ENCODE measurements at regions of chr14 and their contacts with region 1.

Region 1: DNA sequence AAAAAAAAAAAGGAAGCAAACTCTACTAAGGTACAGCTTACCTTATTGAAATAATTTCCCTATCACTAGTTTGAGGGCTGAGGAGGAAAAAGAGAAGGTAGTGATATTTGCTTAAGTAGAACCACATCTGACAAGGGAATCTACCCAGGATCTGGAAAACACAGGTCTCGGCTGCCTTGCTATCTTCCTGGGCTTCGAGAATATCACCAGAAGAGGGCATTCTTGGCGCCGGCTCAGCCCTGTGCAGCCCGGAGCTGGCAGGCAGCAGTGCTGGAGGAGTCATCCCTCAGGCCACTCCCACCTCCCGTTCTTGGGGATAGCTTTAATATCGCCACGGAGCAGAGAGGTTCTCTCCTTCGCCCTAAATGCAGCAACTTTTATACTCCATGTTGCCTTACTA is 1181.2 kb downstream of the VRK1 start:
- DNase-seq: peak; percentile 90
- H3K4me3 Mint-ChIP-seq: peak overlapping the region; percentile 84
- H3K27ac Mint-ChIP-seq: peak overlapping the region; percentile 89
- H3K4me1 Mint-ChIP-seq: peaks cover 45% of the 10 kb centered on the region
- H3K27me3 Mint-ChIP-seq: no peaks in the 10 kb centered on the region

Region 2: GRCh38 chr14:97458661-97459579 is 519.4 kb before region 1 on chr14:
- CTCF ChIA-PET with region 1: interaction called, 3 read pairs
- POLR2A ChIA-PET with region 1: no interaction called
- intact Hi-C with region 1: loop called (anchors 5 kb)
- DNase-seq: peak; percentile 90
- H3K4me3 Mint-ChIP-seq: peak overlapping the region; percentile 96
- H3K27ac Mint-ChIP-seq: peak overlapping the region; percentile 100
- H3K4me1 Mint-ChIP-seq: peaks cover 50% of the 10 kb centered on the region
- H3K27me3 Mint-ChIP-seq: no peaks in the 10 kb centered on the region

Region 3: DNA sequence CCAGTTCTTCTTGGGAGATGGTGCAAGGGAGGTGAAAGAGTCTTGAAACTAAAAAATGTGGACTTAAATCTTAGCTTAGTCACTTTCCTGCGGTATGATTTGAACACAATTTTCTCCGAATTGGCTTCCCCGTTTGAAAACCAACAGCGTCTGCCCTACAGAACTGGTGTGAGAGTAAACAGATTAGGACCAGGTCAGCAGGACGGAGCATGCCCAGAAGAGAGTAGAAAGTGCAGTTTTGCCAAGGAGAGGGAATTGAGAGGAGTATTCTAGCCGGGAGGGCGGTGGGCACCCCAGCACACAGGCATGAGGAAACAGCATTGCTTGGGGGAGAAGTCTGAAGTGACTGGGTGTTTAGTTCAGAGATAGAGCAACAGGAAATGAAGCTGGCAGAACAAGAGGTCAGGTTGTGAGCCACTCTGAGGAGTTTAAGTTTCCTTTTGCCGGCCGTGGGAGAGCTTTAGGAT is 254.0 kb before region 1 on chr14:
- CTCF ChIA-PET with region 1: interaction called, 4 read pairs
- POLR2A ChIA-PET with region 1: no interaction called
- intact Hi-C with region 1: loop called (anchors 5 kb)
- DNase-seq: peak; percentile 58
- H3K4me3 Mint-ChIP-seq: peak overlapping the region; percentile 71
- H3K27ac Mint-ChIP-seq: peak overlapping the region; percentile 92
- H3K4me1 Mint-ChIP-seq: peaks cover 49% of the 10 kb centered on the region
- H3K27me3 Mint-ChIP-seq: no peaks in the 10 kb centered on the region

Region 4: GRCh38 chr14:98099527-98099926 is 121.2 kb after region 1 on chr14:
- CTCF ChIA-PET with region 1: interaction called, 3 read pairs
- POLR2A ChIA-PET with region 1: interaction called, 3 read pairs
- intact Hi-C with region 1: loop called (anchors 2 kb)
- DNase-seq: no peak
- H3K4me3 Mint-ChIP-seq: no peak overlapping the region
- H3K27ac Mint-ChIP-seq: peak overlapping the region; percentile 70
- H3K4me1 Mint-ChIP-seq: peaks cover 33% of the 10 kb centered on the region
- H3K27me3 Mint-ChIP-seq: no peaks in the 10 kb centered on the region

Region 5: GRCh38 chr14:98138666-98139065 is 160.3 kb after region 1 on chr14:
- CTCF ChIA-PET with region 1: interaction called, 67 read pairs
- POLR2A ChIA-PET with region 1: interaction called, 5 read pairs
- intact Hi-C with region 1: loop called (anchors 1 kb)
- DNase-seq: peak; percentile 73
- H3K4me3 Mint-ChIP-seq: peak overlapping the region; percentile 42
- H3K27ac Mint-ChIP-seq: peak overlapping the region; percentile 80
- H3K4me1 Mint-ChIP-seq: peaks cover 76% of the 10 kb centered on the region
- H3K27me3 Mint-ChIP-seq: no peaks in the 10 kb centered on the region

Region 6: GRCh38 chr14:98218218-98218617 is 239.9 kb after region 1 on chr14:
- CTCF ChIA-PET with region 1: no interaction called
- POLR2A ChIA-PET with region 1: no interaction called
- intact Hi-C with region 1: loop called (anchors 5 kb)
- DNase-seq: no peak
- H3K4me3 Mint-ChIP-seq: no peak overlapping the region
- H3K27ac Mint-ChIP-seq: no peak overlapping the region
- H3K4me1 Mint-ChIP-seq: peaks cover 32% of the 10 kb centered on the region
- H3K27me3 Mint-ChIP-seq: no peaks in the 10 kb centered on the region

Region 7: GRCh38 chr14:99266181-99267178 is 1288.1 kb after region 1 on chr14:
- CTCF ChIA-PET with region 1: interaction called, 24 read pairs
- POLR2A ChIA-PET with region 1: interaction called, 12 read pairs
- intact Hi-C with region 1: loop called (anchors 2 kb)
- DNase-seq: peak; percentile 93
- H3K4me3 Mint-ChIP-seq: peak overlapping the region; percentile 96
- H3K27ac Mint-ChIP-seq: peak overlapping the region; percentile 100
- H3K4me1 Mint-ChIP-seq: peaks cover 52% of the 10 kb centered on the region
- H3K27me3 Mint-ChIP-seq: peaks cover under 1% of the 10 kb centered on the region